Activated CD8-positive, alpha-beta memory T cell treated with anti-CD3 and anti-CD28 coated beads, Interleukin-2, amount 10 ng/mL, durations not matched to agents 7 days and 5 days (primary cell): ENCODE measurements at regions of chr1 and their contacts with region 1.

Region 1: DNA sequence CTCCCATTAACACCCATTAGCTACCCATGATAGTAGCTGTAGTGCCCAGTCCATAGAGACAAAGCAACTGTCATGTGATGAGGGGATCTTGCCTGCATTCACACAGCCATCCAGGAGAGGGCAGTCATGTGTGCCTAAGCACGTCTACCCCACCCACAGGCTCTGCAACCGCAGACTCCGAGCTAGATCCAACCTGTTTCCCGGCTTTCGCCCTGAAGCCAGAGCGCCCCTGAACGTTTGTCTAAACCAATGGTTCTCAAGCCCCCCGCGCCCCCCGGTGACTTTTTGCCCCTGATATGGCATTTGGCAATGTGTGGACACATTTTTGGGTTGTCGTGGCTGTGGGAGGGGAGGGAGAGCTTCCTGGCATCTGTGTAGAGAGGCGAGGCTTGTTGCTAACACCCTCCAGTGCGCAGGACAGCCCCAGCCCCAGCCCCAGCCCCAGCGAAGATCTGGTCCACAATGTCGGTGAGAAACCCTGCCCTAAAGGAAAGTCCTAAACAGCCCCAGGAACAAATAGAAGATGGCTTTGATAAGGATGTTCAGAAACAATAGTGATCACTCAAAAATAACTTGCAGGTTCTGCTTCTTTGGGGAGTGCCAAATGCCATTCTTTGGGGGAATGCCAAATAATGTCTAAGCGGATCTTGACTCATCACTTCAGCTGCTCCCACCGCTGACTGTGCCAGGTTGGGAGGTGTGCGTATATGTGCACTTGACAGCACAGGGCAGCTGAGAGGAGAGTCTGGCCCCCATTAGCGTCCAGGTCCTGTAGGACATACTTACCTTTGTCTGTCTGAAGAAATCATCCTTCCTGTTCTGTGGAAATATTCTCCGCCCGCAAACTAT is 34.5 kb downstream of the SLC44A3 start:
- DNase-seq: peak; percentile 88
- ATAC-seq: peak; percentile 99
- H3K4me3 Mint-ChIP-seq: no peak overlapping the region
- H3K27ac Mint-ChIP-seq: no peak overlapping the region
- H3K4me1 Mint-ChIP-seq: no peaks in the 10 kb centered on the region
- H3K27me3 Mint-ChIP-seq: peaks cover 4% of the 10 kb centered on the region

Region 2: DNA sequence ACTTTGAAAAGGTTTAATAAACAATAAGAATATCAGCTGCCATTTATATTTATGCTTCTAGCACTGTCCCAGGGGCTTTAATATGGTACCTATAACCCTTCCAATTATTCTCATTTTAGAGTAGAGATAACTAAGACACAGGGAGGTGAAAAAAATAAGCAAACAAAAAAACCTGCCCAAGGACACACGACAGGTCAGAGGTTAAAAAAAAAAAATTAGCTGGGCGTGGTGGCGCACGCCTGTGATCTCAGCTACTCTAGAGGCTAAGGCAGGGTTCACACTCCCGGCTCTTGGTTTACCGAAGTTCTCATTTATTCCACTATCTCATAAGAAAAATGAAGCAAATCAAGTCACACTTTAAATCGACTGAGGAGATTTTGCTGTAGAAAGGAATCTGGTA is 106.9 kb after region 1 on chr1:
- CTCF ChIA-PET with region 1: interaction called, 12 read pairs
- DNase-seq: no peak
- ATAC-seq: no peak
- H3K4me3 Mint-ChIP-seq: no peak overlapping the region
- H3K27ac Mint-ChIP-seq: no peak overlapping the region
- H3K4me1 Mint-ChIP-seq: peaks cover 9% of the 10 kb centered on the region
- H3K27me3 Mint-ChIP-seq: no peaks in the 10 kb centered on the region

Region 3: GRCh38 chr1:95043141-95043980 is 188.7 kb after region 1 on chr1:
- CTCF ChIA-PET with region 1: interaction called, 115 read pairs
- DNase-seq: peak; percentile 83
- ATAC-seq: peak; percentile 97
- H3K4me3 Mint-ChIP-seq: no peak overlapping the region
- H3K27ac Mint-ChIP-seq: no peak overlapping the region
- H3K4me1 Mint-ChIP-seq: no peaks in the 10 kb centered on the region
- H3K27me3 Mint-ChIP-seq: no peaks in the 10 kb centered on the region